Naive thymus-derived CD8-positive, alpha-beta T cell (primary cell): ENCODE measurements at regions of chr9 and their contacts with region 1.

Region 1: DNA sequence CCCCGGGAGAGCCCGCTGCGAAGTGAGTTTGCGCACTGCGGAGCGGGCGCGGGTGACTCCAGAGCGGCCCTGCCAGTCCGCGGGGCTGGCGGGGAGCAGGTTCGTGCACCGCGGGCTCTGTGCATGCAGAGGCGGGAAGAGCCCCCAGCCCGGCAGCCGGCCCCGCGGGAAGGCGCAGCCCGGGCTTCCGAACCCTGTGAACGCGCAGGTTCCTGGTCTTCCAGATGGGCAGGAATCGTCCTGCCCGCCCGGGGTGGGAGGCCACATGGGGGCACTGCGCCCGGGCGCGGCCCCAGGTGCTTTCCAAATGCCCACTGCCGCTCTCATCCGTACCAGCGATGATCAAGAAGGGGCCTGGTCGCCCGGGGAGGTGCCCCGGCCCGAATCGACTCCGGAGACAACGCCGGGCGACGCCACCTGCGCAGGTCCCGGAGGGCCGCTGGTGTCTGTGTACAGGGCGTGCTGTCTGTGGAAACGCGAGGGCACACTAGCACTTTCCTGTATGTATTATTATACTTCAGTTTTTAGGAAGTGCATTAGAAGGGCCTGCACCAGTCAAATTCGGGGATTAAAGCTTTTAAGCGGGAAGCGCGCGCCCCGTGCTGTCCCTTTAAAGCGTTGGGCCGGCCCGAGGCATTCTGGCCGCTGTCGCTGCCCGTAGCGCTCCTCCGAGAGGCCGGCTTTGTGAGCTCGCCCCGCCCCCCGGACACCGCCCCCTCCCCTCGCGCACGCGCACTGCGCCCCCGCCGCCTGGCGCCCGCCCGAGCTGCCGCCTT is at the start of gene WDR5:
- DNase-seq: peak; percentile 82 to 97 (median 92)
- ATAC-seq: peak; percentile 80 to 84
- H3K4me3 Mint-ChIP-seq: peak within 1 kb of the TSS; percentile 85 to 93 (median 90)
- H3K27ac Mint-ChIP-seq: peak within 1 kb of the TSS; percentile 84 to 96 (median 93)
- H3K4me1 Mint-ChIP-seq: peaks cover 31 to 54% (median 48%) of the 10 kb centered on the region in 4 donors
- H3K27me3 Mint-ChIP-seq: no peaks in the 10 kb centered on the region
- polyA plus RNA-seq, gene WDR5: 11.2 to 14.9 (median 13.4) TPM

Region 2: GRCh38 chr9:134024828-134025605 is 110.5 kb before region 1 on chr9 and contains the start of gene BRD3OS:
- POLR2A ChIA-PET with region 1: interaction called, 14 read pairs
- DNase-seq: peak; percentile 76 to 96 (median 90)
- ATAC-seq: peak; percentile 86 to 91
- H3K4me3 Mint-ChIP-seq: peak within 1 kb of the TSS; percentile 72 to 89 (median 82)
- H3K27ac Mint-ChIP-seq: peak within 1 kb of the TSS; percentile 23 to 90 (median 56)
- H3K4me1 Mint-ChIP-seq: peaks cover 3 to 24% (median 10%) of the 10 kb centered on the region in 4 donors
- H3K27me3 Mint-ChIP-seq: no peaks in the 10 kb centered on the region
- polyA plus RNA-seq, gene BRD3OS: 20.8 to 28.6 (median 25.2) TPM

Region 3: DNA sequence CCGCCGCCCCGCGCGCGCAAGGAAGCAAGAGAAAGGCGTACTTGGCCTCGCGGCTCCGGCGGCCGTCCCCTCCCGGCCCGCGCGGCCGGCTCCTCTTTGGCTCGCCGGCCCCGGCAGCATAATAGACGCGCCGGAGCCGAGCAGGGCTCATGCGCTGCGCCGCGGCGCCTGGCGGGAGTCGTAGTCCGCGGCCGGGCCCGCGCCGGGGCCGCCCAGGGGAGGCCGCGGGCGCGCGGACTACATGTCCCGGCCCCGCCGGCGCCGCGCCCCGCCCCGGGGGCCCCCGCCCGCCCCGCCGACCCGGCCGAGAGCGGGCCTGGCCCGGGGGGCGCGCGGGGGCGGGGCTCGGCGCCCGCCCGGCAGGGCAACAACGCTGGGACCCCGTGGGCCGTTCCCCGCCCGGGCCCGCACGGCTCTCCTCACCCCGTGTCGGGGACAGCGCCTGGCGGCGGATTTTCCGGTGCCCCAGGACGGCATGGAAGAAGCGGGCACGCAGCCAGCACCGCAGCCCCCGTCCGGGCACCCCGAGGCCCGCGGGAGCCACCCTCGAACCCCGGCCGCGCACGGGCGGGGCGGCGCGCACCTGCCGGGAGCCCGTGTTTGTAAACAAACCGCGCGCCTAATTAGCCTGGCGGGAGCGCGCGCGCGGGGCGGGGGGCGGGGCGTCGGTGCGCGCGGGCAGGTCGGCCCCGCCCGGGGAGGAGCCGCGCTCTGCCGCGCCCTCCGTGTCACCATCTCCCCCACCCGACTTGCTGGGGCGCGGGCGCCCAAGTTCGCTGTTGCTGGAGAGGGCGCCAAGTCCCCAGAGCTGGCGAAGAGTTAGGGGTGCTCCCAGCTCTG is 67.4 kb before region 1 on chr9 and contains the start of gene BRD3:
- POLR2A ChIA-PET with region 1: interaction called, 11 read pairs
- DNase-seq: peak; percentile 74 to 90 (median 84)
- ATAC-seq: peak; percentile 80 to 82
- H3K4me3 Mint-ChIP-seq: peak within 1 kb of the TSS; percentile 85 to 94 (median 90)
- H3K27ac Mint-ChIP-seq: peak within 1 kb of the TSS; percentile 85 to 97 (median 94)
- H3K4me1 Mint-ChIP-seq: peaks cover 12 to 37% (median 33%) of the 10 kb centered on the region in 4 donors
- H3K27me3 Mint-ChIP-seq: peaks cover 3 to 20% (median 9%) of the 10 kb centered on the region in 5 donors
- polyA plus RNA-seq, gene BRD3: 13.1 to 30.9 (median 27.8) TPM

Region 4: GRCh38 chr9:134112561-134112960 is 23.0 kb before region 1 on chr9:
- POLR2A ChIA-PET with region 1: no interaction called
- DNase-seq: no peak
- ATAC-seq: no peak
- H3K4me3 Mint-ChIP-seq: no peak overlapping the region
- H3K27ac Mint-ChIP-seq: no peak overlapping the region
- H3K4me1 Mint-ChIP-seq: no peaks in the 10 kb centered on the region
- H3K27me3 Mint-ChIP-seq: peaks cover 0 to 1% (median 0%) of the 10 kb centered on the region in 5 donors

Region 5: DNA sequence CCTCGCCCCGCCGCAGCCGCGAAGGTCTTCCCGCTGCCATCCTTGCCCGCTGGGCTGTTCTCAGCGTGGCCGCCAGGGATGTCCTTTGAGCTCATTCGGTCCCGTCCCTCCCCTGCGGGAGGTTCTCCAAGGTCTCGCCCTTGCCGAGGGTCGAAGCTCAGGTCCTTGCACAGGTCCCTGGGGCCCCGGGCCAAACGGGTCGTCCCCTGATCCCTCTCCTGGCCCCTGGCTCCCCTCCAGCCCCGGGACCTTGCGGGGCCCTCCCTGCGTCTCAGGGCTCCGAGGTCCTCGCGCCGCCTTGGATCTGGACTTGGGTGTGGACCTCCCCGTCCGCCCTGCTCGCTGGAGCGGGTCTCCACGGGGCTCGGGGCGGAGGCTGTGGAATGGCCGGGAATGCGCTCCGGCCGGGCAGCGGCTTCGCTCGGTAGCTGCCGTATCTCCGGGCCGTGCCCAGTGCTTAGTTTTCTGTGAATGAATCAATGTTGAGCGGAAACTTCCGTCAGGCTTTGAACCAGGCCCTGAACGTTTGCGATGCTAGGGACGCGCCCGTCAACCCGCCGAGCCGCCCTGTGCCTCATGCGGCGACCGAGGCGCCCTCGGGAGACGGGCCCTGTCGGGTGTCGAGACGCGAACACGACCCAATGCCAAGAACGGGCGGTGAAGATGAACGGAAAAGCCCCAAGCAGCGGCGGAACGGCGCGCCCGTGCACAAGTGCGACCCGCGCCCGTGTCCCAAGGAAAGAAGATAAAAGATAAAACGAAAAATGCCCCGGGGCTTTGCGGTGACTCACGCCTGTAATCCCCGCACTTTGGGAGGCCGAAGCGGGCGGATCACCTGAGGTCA is 28.0 kb after region 1 on chr9:
- POLR2A ChIA-PET with region 1: interaction called, 71 read pairs
- DNase-seq: peak; percentile 56 to 81 (median 66)
- ATAC-seq: peak in 1 of 2 donors; percentile 7
- H3K4me3 Mint-ChIP-seq: peak overlapping the region in 3 of 10 donors; percentile 20 to 38 (median 26)
- H3K27ac Mint-ChIP-seq: peak overlapping the region in 2 of 10 donors; percentile 8 to 44
- H3K4me1 Mint-ChIP-seq: peaks cover 8 to 25% (median 14%) of the 10 kb centered on the region in 4 donors
- H3K27me3 Mint-ChIP-seq: no peaks in the 10 kb centered on the region

Region 6: GRCh38 chr9:134195558-134195957 is 60.0 kb after region 1 on chr9:
- POLR2A ChIA-PET with region 1: no interaction called
- DNase-seq: peak in 3 of 10 donors; percentile 35 to 48 (median 36)
- ATAC-seq: peak; percentile 25 to 47
- H3K4me3 Mint-ChIP-seq: peak overlapping the region in 9 of 10 donors; percentile 2 to 62 (median 39)
- H3K27ac Mint-ChIP-seq: peak overlapping the region in 8 of 10 donors; percentile 8 to 76 (median 48)
- H3K4me1 Mint-ChIP-seq: peaks cover 8 to 27% (median 16%) of the 10 kb centered on the region in 4 donors
- H3K27me3 Mint-ChIP-seq: no peaks in the 10 kb centered on the region

Region 7: DNA sequence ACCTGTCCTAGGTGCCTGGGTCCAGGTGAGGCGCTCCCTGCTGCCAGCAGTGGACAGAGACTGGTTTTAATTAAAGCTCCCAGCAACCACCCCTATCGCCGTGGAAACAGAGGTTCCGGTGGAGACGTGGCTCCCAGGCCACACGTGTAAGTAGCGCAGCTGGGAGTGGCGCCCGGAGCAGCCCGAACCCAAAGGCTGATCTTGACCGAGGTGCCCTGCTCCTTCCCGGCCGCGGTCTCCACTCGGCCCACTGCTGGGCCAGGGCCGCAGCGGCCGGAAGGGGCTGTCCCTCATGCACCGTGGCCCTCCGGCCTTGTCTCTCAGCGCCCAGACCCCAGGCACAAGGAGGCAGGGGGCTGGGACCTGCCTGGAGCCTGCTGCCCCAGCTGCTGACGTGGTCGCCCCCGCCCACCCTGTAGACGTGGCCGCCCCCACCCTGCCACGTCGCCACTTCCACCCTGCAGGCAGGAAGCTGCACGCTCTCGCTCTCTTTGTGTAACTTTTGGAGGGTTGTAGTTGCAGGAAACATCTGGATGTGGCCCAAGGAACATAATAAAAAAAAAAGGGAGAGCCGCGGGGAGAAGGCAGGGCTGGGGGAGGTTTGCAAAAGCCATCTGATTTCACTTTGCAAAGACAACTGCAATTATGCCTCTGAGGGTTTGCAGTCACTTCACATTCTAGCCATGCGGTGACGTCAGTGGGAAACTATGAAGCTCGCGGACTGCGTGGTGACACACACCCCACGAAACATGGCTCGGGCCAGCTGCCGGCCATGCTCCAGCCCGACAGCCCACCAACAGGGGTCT is 320.6 kb after region 1 on chr9:
- POLR2A ChIA-PET with region 1: interaction called, 12 read pairs
- DNase-seq: peak; percentile 70 to 91 (median 80)
- ATAC-seq: peak; percentile 95
- H3K4me3 Mint-ChIP-seq: peak overlapping the region; percentile 83 to 91 (median 88)
- H3K27ac Mint-ChIP-seq: peak overlapping the region; percentile 92 to 99 (median 98)
- H3K4me1 Mint-ChIP-seq: peaks cover 4 to 20% (median 14%) of the 10 kb centered on the region in 4 donors
- H3K27me3 Mint-ChIP-seq: no peaks in the 10 kb centered on the region